Adrenal gland (tissue), 19 donors: ENCODE measurements at regions of chr4 and their contacts with region 1.

Region 1: GRCh38 chr4:143700416-143701352 is at the start of gene FREM3:
- DNase-seq: peak in 1 of 7 donors; percentile 15
- H3K4me3 ChIP-seq: peak within 1 kb of the TSS in 1 of 4 donors; percentile 33
- H3K27ac ChIP-seq: no peak within 1 kb of the TSS
- H3K4me1 ChIP-seq: peaks cover 6 to 16% of the 10 kb centered on the region in 2 donors
- H3K27me3 ChIP-seq: peaks cover 37% of the 10 kb centered on the region
- CTCF ChIP-seq: no peak
- POLR2A ChIP-seq: no peak
- total RNA-seq, gene FREM3: 0.06 to 0.22 TPM in 2 of 9 donors, not detected in the others

Region 2: DNA sequence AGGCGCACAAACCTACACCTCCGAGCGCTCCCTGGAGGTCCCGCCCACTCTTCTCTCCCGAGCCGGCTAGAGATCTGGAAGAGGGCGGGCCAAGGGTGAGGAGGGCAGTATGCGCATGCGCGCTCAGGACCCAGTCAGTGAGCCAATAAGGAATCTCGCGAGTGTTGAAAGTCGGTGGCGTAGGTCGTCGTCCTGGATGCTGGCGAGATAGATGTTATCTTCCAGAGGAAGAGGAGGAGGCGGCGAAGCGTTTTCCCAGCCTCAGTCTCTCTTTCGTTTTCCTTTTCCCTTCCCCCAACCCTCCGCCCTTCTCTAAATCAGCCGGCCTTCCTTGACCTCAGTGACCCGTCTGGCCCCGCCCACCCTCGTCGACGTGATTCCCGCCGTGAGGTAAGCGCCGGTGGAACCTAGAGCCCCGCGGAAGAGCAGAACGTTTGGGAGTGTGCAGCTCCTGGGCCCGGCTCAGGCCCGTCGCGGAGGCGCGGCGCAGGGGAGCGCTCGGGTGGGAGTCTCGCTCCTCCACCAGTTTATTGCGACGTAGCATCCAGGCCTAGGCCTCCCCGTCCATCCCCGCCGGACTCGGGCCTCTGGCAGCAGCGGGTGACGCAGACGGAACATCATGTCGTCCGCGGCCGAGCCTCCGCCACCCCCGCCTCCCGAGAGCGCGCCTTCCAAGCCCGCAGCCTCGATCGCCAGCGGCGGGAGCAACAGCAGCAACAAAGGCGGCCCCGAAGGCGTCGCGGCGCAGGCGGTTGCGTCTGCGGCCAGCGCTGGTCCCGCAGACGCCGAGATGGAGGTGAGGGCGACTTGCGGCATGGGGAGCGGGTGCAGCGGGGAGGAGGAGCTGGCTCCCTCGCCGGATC is 187.1 kb before region 1 on chr4 and contains the start of gene SMARCA5:
- intact Hi-C with region 1: no loop called
- DNase-seq: peak; percentile 96 to 99 (median 98)
- H3K4me3 ChIP-seq: peak within 1 kb of the TSS; percentile 81 to 94 (median 82)
- H3K27ac ChIP-seq: peak within 1 kb of the TSS; percentile 97 to 100 (median 98)
- H3K4me1 ChIP-seq: peaks cover 20 to 35% of the 10 kb centered on the region in 2 donors
- H3K27me3 ChIP-seq: no peaks in the 10 kb centered on the region
- CTCF ChIP-seq: no peak
- POLR2A ChIP-seq: peak; percentile 85 to 89
- total RNA-seq, gene SMARCA5: 35.5 to 67.9 (median 61.5) TPM

Region 3: DNA sequence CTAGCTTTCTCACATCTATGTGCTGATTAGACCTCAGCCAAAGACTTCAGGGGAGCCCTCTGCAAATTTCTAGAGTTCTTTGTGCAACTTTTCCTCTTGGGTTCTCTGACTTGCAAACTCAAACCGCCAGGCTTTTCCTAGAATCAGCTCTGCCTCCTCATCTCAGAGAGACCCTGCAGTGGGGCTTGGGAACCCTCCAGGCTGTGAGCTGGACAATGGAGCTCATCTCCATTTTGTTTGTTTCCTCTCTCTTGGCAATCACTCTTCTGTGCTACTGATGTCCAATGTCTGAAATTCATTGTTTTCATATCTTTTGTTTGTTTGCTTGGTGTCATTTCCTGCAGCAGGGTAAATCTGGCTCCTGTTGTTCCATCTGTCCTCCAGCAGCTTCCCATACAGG is 285.5 kb after region 1 on chr4:
- intact Hi-C with region 1: loop called in 1 of 2 experiments (anchors 5 kb)
- DNase-seq: no peak
- H3K4me3 ChIP-seq: no peak overlapping the region
- H3K27ac ChIP-seq: no peak overlapping the region
- H3K4me1 ChIP-seq: no peaks in the 10 kb centered on the region
- H3K27me3 ChIP-seq: no peaks in the 10 kb centered on the region
- CTCF ChIP-seq: no peak
- POLR2A ChIP-seq: no peak